ENCODE measurements at regions of chr19 and their contacts with region 1.

Region 1: DNA sequence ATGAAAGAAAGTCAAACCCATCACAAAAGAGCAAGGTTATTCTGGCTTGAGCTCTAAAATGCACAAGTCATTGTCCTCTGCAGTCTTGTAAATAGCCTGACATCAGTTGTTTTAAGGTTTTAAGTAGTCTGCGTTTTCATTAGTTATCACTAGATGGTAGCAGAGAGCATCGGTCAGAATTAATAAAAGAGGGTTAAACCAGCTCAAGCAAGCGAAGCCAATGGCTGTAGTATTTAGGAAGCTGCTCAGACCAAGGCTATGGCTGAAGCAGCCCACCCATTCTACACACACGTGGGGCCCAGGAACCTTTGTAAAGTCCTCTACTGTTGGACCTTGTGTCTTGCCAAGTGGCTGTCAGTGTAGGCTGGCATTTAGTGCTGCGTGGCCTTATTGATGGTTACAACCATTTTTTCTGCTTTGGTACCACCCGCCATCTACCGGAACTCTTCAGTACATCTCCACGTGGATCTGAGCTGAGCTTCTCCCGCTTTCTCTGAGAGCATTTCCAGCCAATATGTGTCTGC is 13.3 kb upstream of the ZNF57 start:
- DNase-seq: peak; percentile 78
- H3K4me3 ChIP-seq: no peak overlapping the region
- H3K27ac ChIP-seq: no peak overlapping the region
- H3K4me1 ChIP-seq: peaks cover 0 to 3% of the 10 kb centered on the region in 2 experiments; a peak in 1 of 4 replicates
- H3K27me3 ChIP-seq: no peaks in the 10 kb centered on the region
- CTCF ChIP-seq: peak; percentile 70
- EP300 ChIP-seq: no peak
- RAD21 ChIP-seq: peak; percentile 70

Region 2: DNA sequence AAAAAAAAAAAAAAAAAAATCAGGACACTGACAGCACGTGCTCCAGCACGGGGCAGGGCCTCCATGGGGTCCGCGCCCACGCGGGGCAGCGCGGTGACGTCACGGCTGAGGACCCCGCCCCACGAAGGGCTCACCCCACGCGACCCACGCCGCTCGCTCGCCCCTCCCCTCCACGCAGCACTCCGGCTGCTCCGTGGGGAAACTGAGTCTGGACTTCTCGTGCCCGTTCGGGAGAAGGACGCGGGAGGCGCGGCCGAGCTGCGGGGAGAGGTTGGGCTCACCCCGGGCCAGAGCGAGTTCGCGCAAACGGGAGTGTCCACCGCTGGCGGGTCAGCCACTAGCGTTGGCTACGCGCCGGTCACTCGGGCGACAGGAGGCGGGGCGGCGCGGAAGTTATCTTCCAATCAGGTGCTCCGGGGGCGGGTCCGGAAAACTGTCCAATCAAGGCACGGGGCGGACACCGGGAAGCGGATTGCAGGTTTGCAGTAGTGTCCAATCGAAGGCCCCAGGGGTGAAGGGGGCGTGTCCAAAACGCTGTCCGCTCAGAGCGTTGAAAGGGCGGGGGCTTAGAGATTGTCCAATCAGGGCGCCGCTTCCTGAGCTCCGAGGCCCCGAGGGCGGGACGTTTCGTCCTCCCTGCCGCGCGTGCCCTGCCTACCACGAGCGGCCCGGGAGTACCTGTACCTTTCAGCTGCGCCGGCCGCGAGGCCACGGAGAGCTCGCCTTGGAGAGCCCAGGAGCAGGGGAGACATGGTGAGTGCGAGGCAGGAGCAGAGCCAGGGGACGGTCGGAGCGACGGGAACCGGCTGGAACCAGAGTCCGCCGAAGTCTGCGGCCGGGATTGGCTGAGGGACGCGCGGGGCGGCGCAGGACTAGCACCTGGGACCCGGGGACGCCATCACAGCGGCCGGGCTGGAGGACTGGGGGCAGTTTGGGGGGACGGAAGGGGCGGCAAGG is 13.1 kb after region 1 on chr19 and contains the start of gene ZNF57:
- CTCF ChIA-PET with region 1: interaction called, 22 read pairs
- POLR2A ChIA-PET with region 1: no interaction called
- DNase-seq: peak; percentile 99
- H3K4me3 ChIP-seq: peak within 1 kb of the TSS; percentile 80 to 81
- H3K27ac ChIP-seq: peak within 1 kb of the TSS; percentile 61 to 74; a peak in 3 of 4 replicates
- H3K4me1 ChIP-seq: peaks cover 0 to 6% of the 10 kb centered on the region in 2 experiments; a peak in 1 of 4 replicates
- H3K27me3 ChIP-seq: no peaks in the 10 kb centered on the region
- CTCF ChIP-seq: no peak
- EP300 ChIP-seq: no peak
- RAD21 ChIP-seq: no peak
- polyA plus RNA-seq, gene ZNF57: 2.1 and 3.2 TPM in 2 replicates

Region 3: DNA sequence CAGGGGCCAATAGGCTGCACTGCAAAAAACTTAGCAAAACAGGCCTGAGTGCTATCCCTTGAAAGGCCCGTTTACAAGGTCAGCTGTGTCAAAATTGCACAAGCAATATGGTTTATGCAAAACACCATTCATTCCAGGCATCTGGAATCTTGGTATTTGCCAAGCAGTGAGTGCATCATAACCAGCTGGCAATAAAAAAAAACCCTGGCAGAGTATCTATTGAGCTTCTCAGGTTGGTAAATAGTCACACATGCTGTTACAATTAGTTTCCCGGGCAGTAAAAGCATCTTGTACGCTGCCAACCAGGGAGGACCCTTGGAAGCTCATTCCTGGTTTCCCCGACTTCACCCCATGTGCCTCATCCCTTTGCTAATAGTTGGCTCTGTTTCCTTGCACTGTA is 36.1 kb after region 1 on chr19:
- CTCF ChIA-PET with region 1: interaction called, 15 read pairs
- POLR2A ChIA-PET with region 1: no interaction called
- DNase-seq: no peak
- H3K4me3 ChIP-seq: no peak overlapping the region
- H3K27ac ChIP-seq: no peak overlapping the region
- H3K4me1 ChIP-seq: peaks cover 0 to 2% of the 10 kb centered on the region in 2 experiments; a peak in 1 of 4 replicates
- H3K27me3 ChIP-seq: no peaks in the 10 kb centered on the region
- CTCF ChIP-seq: no peak
- EP300 ChIP-seq: no peak
- RAD21 ChIP-seq: no peak

Measured in SK-N-SH (cell line).